ENCODE measurements at regions of chr10 and their contacts with region 1.

Region 1: GRCh38 chr10:22655311-22655981 is 58.9 kb downstream of the PIP4K2A start:
- DNase-seq: no peak
- ATAC-seq: peak; percentile 24
- H3K4me3 Mint-ChIP-seq: peak overlapping the region; percentile 73
- H3K27ac Mint-ChIP-seq: peak overlapping the region; percentile 90
- H3K4me1 Mint-ChIP-seq: peaks cover 83% of the 10 kb centered on the region
- H3K27me3 Mint-ChIP-seq: no peaks in the 10 kb centered on the region

Region 2: DNA sequence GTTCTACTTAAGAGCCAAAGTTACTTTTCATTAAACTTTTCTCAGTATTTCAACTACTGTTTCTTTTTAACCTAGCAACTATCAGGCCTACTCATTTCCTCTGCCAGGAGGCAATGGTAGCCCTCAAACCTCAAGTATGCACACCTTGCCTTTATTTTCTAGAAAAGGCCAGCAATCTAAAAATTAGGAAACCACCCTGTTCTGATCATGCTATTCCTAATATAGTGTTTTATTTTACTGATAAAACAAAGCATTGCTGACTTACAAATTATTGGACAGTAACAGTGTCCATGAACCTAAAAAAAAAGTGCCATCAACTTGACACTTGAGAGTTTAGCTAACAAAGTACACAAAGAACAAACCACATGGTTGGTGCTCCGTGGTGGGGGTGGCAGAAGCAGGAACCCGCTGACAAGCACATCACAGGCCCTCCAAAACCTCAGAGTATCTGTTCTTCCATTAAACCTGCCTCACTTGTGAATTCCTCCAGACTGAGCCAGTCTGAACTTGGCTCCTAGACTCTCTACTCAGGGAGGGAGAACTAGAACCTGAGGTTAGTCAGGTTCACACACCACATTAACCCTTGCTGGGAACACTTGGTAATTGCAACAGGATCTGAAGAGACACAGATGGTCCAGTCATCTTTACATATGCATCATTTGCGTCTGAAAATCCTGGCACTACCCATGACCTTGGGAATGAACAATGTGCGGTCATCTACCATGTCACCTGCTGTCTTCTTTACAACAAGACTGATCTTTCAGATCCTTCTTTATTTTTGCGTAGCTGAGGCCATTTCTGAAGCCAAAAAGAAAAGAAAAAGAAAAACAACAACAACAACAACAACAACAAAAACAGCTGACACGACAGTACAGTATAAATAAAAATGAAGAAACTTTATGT is 27.0 kb after region 1 on chr10:
- POLR2A ChIA-PET with region 1: interaction called, 13 read pairs
- DNase-seq: peak; percentile 69
- ATAC-seq: peak; percentile 54
- H3K4me3 Mint-ChIP-seq: peak overlapping the region; percentile 71
- H3K27ac Mint-ChIP-seq: peak overlapping the region; percentile 96
- H3K4me1 Mint-ChIP-seq: peaks cover 80% of the 10 kb centered on the region
- H3K27me3 Mint-ChIP-seq: no peaks in the 10 kb centered on the region

Measured in activated naive CD8-positive, alpha-beta T cell treated with anti-CD3 and anti-CD28 coated beads, Interleukin-2, amount 10 ng/mL, durations not matched to agents 7 days and 5 days (primary cell).